ENCODE measurements at regions of chr16 and their contacts with region 1.

Region 1: GRCh38 chr16:2078691-2079090 is 30.9 kb downstream of the TSC2 start:
- DNase-seq: no peak
- H3K4me3 ChIP-seq: no peak overlapping the region
- H3K27ac ChIP-seq: no peak overlapping the region; a peak in 1 of 4 replicates
- H3K4me1 ChIP-seq: no peaks in the 10 kb centered on the region
- H3K27me3 ChIP-seq: no peaks in the 10 kb centered on the region
- CTCF ChIP-seq: no peak
- EP300 ChIP-seq: no peak
- RAD21 ChIP-seq: no peak

Region 2: GRCh38 chr16:2064368-2064945 is 14.2 kb before region 1 on chr16:
- CTCF ChIA-PET with region 1: interaction called, 10 read pairs
- POLR2A ChIA-PET with region 1: interaction called, 4 read pairs
- DNase-seq: no peak
- H3K4me3 ChIP-seq: no peak overlapping the region
- H3K27ac ChIP-seq: no peak overlapping the region
- H3K4me1 ChIP-seq: no peaks in the 10 kb centered on the region
- H3K27me3 ChIP-seq: no peaks in the 10 kb centered on the region
- CTCF ChIP-seq: no peak
- EP300 ChIP-seq: no peak
- RAD21 ChIP-seq: no peak